IMR-90 (cell line): ENCODE measurements at regions of chr17 and their contacts with region 1.

Region 1: DNA sequence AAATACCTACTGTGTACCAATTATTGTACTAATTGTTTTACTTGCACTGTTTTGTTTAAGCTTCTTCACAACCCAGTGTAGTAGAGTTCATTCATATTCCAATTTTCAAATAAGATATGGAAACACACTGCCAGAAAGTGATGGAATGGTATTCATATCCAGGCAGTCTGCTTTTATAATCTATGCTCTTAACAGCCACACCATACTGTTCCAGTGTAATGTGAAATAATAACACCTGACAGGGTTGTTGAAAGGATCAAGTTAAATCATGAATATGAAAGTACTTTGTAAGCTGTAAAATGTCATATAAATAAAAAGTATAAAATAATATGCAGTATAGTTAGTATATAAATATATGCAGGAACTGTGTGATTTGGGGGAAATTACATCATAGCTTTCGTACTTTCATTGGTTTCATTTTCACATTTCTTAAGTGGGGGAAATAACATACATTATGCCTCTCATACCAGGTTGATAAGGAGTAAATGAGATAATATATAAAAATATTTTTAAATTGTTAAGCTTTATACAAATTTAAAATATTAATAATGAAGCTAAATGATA is 230.8 kb downstream of the TANC2 start:
- DNase-seq: no peak
- ATAC-seq: no peak
- H3K4me3 ChIP-seq: no peak overlapping the region
- H3K27ac ChIP-seq: no peak overlapping the region
- H3K4me1 ChIP-seq: no peaks in the 10 kb centered on the region
- H3K27me3 ChIP-seq: no peaks in the 10 kb centered on the region
- CTCF ChIP-seq: no peak
- POLR2A ChIP-seq: no peak
- RAD21 ChIP-seq: no peak

Region 2: DNA sequence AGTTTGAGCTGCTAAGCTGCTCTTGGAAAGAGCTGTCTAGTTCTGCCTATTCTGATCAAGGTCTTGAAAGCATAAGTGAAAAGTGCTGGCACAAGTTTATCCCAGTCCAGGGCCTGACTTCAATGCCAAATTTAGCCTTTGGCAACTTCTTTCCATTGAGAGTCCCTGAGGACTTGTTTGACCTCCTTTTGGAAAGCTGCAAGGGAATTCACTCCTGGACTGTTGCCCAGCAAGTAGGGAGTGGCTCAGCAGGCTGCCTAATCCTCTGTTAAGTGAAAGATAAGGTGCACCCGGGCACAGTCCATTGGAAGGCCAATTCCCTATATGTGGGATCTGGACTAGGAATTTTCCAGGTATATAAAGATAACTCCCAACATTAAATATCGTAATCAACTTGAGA is 246.8 kb before region 1 on chr17:
- CTCF ChIA-PET with region 1: no interaction called
- POLR2A ChIA-PET with region 1: no interaction called
- dilution Hi-C with region 1: no loop called
- in situ Hi-C with region 1: no loop called
- intact Hi-C with region 1: no loop called
- DNase-seq: peak; percentile 45
- ATAC-seq: no peak
- H3K4me3 ChIP-seq: no peak overlapping the region
- H3K27ac ChIP-seq: no peak overlapping the region
- H3K4me1 ChIP-seq: no peaks in the 10 kb centered on the region
- H3K27me3 ChIP-seq: no peaks in the 10 kb centered on the region; the same call in 1 of the 2 replicates
- CTCF ChIP-seq: no peak
- POLR2A ChIP-seq: no peak
- RAD21 ChIP-seq: no peak

Region 3: DNA sequence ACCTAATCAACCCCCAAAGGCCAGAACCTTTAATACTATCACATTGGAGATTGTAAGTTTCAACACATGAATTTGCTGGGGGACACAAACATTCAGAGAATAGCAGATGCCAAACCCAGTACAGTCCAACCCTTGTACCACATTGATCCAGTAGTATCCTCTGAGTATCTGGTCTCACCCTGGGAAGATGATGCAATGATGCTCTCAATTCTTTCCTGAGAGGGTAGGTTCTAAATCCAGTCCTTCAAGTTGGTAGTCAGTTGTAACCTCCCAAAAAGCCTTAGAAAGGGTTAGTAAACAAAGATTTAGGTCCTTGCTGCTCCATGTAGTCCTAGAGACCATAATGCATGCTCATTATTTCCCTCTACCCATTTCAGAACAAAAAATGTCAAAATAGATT is 17.8 kb after region 1 on chr17:
- CTCF ChIA-PET with region 1: no interaction called
- POLR2A ChIA-PET with region 1: no interaction called
- dilution Hi-C with region 1: no loop called
- in situ Hi-C with region 1: no loop called
- intact Hi-C with region 1: loop called (anchors 1 kb)
- DNase-seq: no peak
- ATAC-seq: no peak
- H3K4me3 ChIP-seq: no peak overlapping the region
- H3K27ac ChIP-seq: no peak overlapping the region
- H3K4me1 ChIP-seq: no peaks in the 10 kb centered on the region
- H3K27me3 ChIP-seq: no peaks in the 10 kb centered on the region
- CTCF ChIP-seq: no peak
- POLR2A ChIP-seq: no peak
- RAD21 ChIP-seq: no peak

Region 4: DNA sequence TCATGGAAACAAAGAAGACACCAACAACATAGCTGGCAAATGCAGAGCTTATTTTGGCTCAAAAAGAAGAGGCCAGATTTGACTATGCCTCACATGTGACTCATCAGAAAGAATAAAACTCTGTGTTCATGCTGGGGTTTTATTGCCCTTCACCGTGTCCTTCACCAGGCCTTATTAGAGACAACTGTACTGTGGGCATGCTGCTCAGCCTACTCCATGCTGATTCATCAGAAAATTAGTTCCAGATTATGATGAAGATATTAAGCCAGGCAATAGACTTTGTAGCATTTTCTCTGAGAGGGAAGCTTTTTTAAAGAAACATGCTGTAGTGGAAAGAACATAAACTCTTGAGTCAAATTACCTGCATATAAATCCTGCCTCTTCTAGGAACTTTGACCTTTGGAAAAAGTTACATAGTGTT is 159.5 kb after region 1 on chr17:
- CTCF ChIA-PET with region 1: no interaction called
- POLR2A ChIA-PET with region 1: no interaction called
- dilution Hi-C with region 1: no loop called
- in situ Hi-C with region 1: no loop called
- intact Hi-C with region 1: no loop called
- DNase-seq: peak; percentile 86
- ATAC-seq: peak; percentile 66
- H3K4me3 ChIP-seq: no peak overlapping the region
- H3K27ac ChIP-seq: no peak overlapping the region
- H3K4me1 ChIP-seq: peaks cover 25% of the 10 kb centered on the region
- H3K27me3 ChIP-seq: no peaks in the 10 kb centered on the region
- CTCF ChIP-seq: no peak
- POLR2A ChIP-seq: no peak
- RAD21 ChIP-seq: no peak

Region 5: DNA sequence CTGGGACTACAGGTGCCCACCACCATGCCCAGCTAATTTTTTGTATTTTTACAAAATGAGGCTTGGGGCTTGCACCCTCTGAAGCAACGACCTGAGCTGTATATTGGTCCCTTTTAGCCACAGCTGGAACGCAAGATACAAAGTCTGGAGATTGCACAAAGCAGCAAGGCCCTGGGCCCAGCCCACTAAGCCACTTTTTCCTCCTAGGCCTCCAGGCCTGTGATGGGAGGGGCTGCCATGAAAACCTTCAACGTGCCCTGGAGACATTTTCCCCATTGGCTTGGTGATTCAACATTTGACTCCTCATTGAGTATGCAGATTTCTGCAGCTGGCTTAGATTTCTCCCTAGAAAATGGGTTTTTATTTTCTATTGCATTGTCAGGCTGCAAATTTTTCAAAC is 180.1 kb after region 1 on chr17:
- CTCF ChIA-PET with region 1: no interaction called
- POLR2A ChIA-PET with region 1: interaction called, 19 read pairs
- dilution Hi-C with region 1: no loop called
- in situ Hi-C with region 1: no loop called
- intact Hi-C with region 1: no loop called
- DNase-seq: no peak
- ATAC-seq: no peak
- H3K4me3 ChIP-seq: no peak overlapping the region
- H3K27ac ChIP-seq: no peak overlapping the region
- H3K4me1 ChIP-seq: peaks cover 2% of the 10 kb centered on the region; the same call in 1 of the 2 replicates
- H3K27me3 ChIP-seq: no peaks in the 10 kb centered on the region
- CTCF ChIP-seq: no peak
- POLR2A ChIP-seq: no peak
- RAD21 ChIP-seq: no peak

Region 6: GRCh38 chr17:63519972-63520882 is 323.4 kb after region 1 on chr17:
- CTCF ChIA-PET with region 1: no interaction called
- POLR2A ChIA-PET with region 1: no interaction called
- dilution Hi-C with region 1: no loop called
- in situ Hi-C with region 1: no loop called
- intact Hi-C with region 1: no loop called
- DNase-seq: no peak
- ATAC-seq: no peak
- H3K4me3 ChIP-seq: no peak overlapping the region
- H3K27ac ChIP-seq: no peak overlapping the region
- H3K4me1 ChIP-seq: peaks cover 5% of the 10 kb centered on the region
- H3K27me3 ChIP-seq: peaks cover 25% of the 10 kb centered on the region
- CTCF ChIP-seq: no peak
- POLR2A ChIP-seq: no peak
- RAD21 ChIP-seq: no peak

Region 7: GRCh38 chr17:63600569-63601438 is 403.9 kb after region 1 on chr17 and contains the start of gene TACO1:
- CTCF ChIA-PET with region 1: no interaction called
- POLR2A ChIA-PET with region 1: no interaction called
- dilution Hi-C with region 1: no loop called
- in situ Hi-C with region 1: no loop called
- intact Hi-C with region 1: no loop called
- DNase-seq: peak; percentile 83
- ATAC-seq: peak; percentile 99
- H3K4me3 ChIP-seq: peak within 1 kb of the TSS; percentile 84
- H3K27ac ChIP-seq: peak within 1 kb of the TSS; percentile 66
- H3K4me1 ChIP-seq: peaks cover 8% of the 10 kb centered on the region
- H3K27me3 ChIP-seq: no peaks in the 10 kb centered on the region
- CTCF ChIP-seq: no peak
- POLR2A ChIP-seq: peak; percentile 43; the same call in 1 of the 2 replicates
- RAD21 ChIP-seq: 0 out of 2 replicates have a peak, but pooled peaks have one; percentile 17
- total RNA-seq, gene TACO1: 6.5 and 9.4 TPM in 2 replicates